ENCODE measurements at regions of chr21 and their contacts with region 1.

Region 1: GRCh38 chr21:42145569-42146272 is 73.2 kb upstream of the ABCG1 start:
- DNase-seq: no peak
- ATAC-seq: peak; percentile 73
- H3K4me3 ChIP-seq: no peak overlapping the region
- H3K27ac ChIP-seq: no peak overlapping the region
- H3K4me1 ChIP-seq: no peaks in the 10 kb centered on the region
- H3K27me3 ChIP-seq: no peaks in the 10 kb centered on the region

Region 2: DNA sequence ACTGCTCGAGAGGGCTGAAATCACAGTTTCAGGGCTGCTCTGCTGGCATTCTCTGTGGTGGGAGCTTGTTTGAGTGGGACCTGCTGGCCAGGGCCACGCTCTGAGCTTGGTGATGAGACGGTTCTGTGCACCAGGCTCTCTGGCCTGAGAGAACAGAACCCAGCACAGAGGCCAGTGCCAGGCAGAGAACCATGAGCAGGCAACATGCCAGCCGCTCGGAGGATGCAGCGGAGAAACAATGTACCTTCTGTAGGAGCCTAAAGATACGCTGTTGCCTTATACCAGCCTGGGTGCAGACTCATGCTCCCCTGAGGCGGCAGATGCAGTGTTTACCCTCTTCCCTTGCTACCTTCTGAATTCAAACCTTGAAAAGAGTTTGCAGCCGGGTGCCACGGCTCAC is 201.9 kb before region 1 on chr21:
- intact Hi-C with region 1: no loop called
- DNase-seq: peak; percentile 24 to 49
- ATAC-seq: no peak
- H3K4me3 ChIP-seq: no peak overlapping the region
- H3K27ac ChIP-seq: no peak overlapping the region
- H3K4me1 ChIP-seq: peaks cover 0 to under 1% of the 10 kb centered on the region in 2 donors
- H3K27me3 ChIP-seq: no peaks in the 10 kb centered on the region

Region 3: DNA sequence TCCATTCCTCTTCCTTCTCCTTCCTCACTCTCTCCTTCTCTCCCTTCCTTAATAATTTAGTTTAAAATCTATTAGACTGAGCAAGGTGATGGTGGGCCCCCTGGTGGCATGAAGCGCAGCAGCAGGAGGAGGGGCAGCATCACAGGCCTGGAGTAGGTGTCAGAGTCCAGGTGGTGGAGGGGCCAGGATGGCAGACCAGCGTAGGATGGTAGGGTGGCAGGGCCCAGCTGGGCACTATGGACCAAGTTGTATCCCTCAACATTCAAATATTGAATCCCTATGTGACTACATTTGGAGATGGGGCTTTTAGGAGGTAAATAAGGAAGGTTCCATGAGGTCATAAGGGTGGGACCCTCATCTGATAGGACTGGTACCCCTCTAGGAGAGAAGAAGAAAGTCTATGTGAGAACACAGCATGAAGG is 672.6 kb after region 1 on chr21:
- intact Hi-C with region 1: loop called in 1 of 2 experiments (anchors 5 kb)
- DNase-seq: peak in 1 of 2 donors; percentile 71
- ATAC-seq: peak; percentile 79
- H3K4me3 ChIP-seq: no peak overlapping the region
- H3K27ac ChIP-seq: no peak overlapping the region
- H3K4me1 ChIP-seq: no peaks in the 10 kb centered on the region
- H3K27me3 ChIP-seq: no peaks in the 10 kb centered on the region